ENCODE measurements at regions of chr16 and their contacts with region 1.

Region 1: GRCh38 chr16:30922960-30923535 is 324 bp upstream of the FBXL19 start:
- DNase-seq: peak; percentile 98
- H3K4me3 Mint-ChIP-seq: peak overlapping the region; percentile 99
- H3K27ac Mint-ChIP-seq: peak overlapping the region; percentile 100
- H3K4me1 Mint-ChIP-seq: peaks cover 10% of the 10 kb centered on the region
- H3K27me3 Mint-ChIP-seq: no peaks in the 10 kb centered on the region

Region 2: DNA sequence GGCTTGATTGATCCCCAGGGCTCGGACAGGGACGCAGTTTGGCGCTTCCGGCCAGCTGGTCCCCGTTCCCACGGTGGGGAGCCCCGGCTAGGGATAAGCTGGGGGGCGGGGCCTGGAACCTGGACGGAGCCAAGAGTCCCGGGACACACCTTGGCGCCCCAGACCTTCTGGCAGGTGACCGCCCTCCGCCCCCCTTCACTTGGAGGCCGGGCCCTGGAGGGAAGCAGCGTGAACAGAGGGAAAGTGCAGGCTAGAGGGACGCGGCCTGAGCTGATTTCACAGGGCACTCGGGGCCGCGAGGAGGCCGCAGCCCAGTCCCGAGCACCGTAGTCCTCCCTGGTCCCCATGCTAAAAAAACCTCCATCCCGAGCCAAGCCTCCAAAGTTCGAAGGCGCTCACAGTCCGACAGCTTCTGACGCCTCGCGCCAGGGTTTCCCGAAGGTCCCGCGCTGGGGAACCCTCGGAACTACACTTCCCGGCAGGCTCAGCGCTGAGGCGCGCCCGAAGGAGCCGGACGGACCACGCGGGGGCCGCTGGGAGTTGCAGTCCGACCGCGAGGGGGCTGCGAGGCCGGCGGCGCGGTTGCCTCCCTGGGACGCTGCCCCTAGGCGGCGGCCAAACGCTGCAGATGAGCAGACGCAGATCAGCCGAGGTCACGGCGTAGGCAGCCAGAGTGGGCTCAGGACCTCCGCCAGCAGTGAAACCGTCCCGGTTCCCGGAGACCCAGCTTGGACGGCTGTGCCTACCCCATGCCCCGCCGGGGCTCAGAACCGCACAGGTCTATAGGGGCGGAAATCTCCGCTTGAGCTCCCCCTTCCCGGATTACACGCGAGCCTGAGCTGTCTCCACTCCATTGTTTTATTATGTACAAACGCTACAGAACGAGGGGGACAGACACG is 831.3 kb before region 1 on chr16 and contains the start of gene TBX6:
- CTCF ChIA-PET with region 1: no interaction called
- POLR2A ChIA-PET with region 1: no interaction called
- intact Hi-C with region 1: no loop called
- DNase-seq: peak; percentile 96
- H3K4me3 Mint-ChIP-seq: peak within 1 kb of the TSS; percentile 83
- H3K27ac Mint-ChIP-seq: peak within 1 kb of the TSS; percentile 94
- H3K4me1 Mint-ChIP-seq: peaks cover 44% of the 10 kb centered on the region
- H3K27me3 Mint-ChIP-seq: no peaks in the 10 kb centered on the region
- total RNA-seq, gene TBX6: 2.3 to 2.9 TPM

Region 3: GRCh38 chr16:30370444-30371247 is 552.4 kb before region 1 on chr16 and contains the start of gene TBC1D10B:
- CTCF ChIA-PET with region 1: no interaction called
- POLR2A ChIA-PET with region 1: no interaction called
- intact Hi-C with region 1: loop called (anchors 10 kb)
- DNase-seq: peak; percentile 100
- H3K4me3 Mint-ChIP-seq: peak within 1 kb of the TSS; percentile 91
- H3K27ac Mint-ChIP-seq: peak within 1 kb of the TSS; percentile 95
- H3K4me1 Mint-ChIP-seq: peaks cover 34% of the 10 kb centered on the region
- H3K27me3 Mint-ChIP-seq: peaks cover 3% of the 10 kb centered on the region
- total RNA-seq, gene TBC1D10B: 54.7 to 54.8 TPM

Region 4: DNA sequence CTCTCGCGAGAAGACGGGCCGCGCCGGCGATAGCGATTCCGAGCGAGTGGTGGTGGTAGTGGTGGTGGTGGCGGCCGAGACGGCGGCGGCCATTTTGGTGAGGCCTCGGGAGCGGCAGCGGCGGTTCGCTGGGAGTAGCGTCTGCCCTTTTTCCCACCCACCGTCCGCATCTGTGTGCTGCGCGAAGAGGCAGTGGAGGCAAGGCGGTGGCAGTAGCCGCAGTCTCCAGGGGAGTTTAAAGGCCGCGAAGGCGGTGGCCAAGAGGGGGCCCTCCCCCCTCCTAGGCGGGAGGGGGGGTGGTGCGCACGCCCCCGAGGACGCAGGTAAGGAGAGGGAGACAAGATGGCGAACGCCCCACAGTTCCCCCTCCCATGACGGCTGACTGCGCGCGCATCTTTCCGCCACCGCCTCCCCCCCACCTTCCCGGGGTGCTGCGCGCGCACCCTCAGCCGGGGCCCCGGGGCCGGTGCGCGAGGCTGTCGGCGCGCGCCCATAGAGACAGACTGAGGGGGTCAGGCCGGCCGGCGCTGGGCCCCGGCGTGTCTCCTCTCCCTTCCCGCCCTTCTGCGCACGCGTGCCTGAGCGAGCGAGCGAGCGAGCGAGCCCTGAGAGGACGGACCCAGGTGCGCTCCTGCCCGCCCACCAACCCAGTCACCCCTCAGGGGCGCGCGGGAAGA is 224.8 kb before region 1 on chr16:
- CTCF ChIA-PET with region 1: no interaction called
- POLR2A ChIA-PET with region 1: no interaction called
- intact Hi-C with region 1: loop called (anchors 1 kb)
- DNase-seq: peak; percentile 99
- H3K4me3 Mint-ChIP-seq: peak overlapping the region; percentile 96
- H3K27ac Mint-ChIP-seq: peak overlapping the region; percentile 99
- H3K4me1 Mint-ChIP-seq: peaks cover 29% of the 10 kb centered on the region
- H3K27me3 Mint-ChIP-seq: no peaks in the 10 kb centered on the region

Region 5: DNA sequence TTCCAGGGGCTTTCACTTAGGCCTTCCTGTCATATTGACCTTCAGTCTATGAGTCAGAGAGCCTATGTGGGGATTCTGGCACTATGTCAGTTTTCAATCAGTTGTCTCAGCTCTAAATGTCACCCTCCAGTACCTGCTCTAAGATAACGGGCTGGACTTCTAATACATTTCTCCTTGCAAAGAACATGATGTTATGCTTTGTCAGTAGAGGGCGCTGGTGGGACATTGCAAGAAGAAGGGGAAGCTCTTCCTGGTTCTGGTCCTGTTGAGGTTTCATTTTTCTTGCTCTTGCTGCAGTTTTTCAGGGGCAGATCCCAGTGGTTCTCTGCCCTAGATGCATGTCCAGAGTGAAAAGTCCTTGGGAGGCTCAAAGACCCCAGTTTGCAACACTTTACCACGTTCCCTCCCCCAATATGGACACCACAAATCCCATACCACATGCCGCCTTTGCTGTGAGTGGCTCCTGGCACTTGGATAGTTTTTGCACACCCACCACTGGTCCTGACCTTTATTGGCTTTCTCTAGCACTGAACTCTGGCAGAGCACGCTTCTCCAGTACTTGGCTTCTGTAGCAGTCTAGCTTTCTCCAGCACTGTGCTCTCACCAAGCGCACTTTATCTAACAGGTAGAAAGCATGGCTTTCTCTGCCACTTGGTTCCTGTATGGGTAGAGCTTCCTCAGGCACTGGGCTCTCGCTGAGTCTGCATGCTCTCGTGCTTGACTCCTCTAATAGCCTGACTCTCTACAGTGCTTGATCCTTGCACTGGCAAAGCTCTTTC is 78.2 kb before region 1 on chr16:
- CTCF ChIA-PET with region 1: interaction called, 26 read pairs
- POLR2A ChIA-PET with region 1: no interaction called
- intact Hi-C with region 1: loop called (anchors 1 kb)
- DNase-seq: peak; percentile 80
- H3K4me3 Mint-ChIP-seq: no peak overlapping the region
- H3K27ac Mint-ChIP-seq: no peak overlapping the region
- H3K4me1 Mint-ChIP-seq: peaks cover 9% of the 10 kb centered on the region
- H3K27me3 Mint-ChIP-seq: no peaks in the 10 kb centered on the region

Region 6: GRCh38 chr16:30902029-30902972 is 20.7 kb before region 1 on chr16:
- CTCF ChIA-PET with region 1: interaction called, 3 read pairs
- POLR2A ChIA-PET with region 1: interaction called, 3 read pairs
- intact Hi-C with region 1: loop called (anchors 1 kb)
- DNase-seq: peak; percentile 69
- H3K4me3 Mint-ChIP-seq: peak overlapping the region; percentile 93
- H3K27ac Mint-ChIP-seq: peak overlapping the region; percentile 95
- H3K4me1 Mint-ChIP-seq: peaks cover 27% of the 10 kb centered on the region
- H3K27me3 Mint-ChIP-seq: no peaks in the 10 kb centered on the region

Region 7: GRCh38 chr16:31073968-31074813 is 151.1 kb after region 1 on chr16 and contains the starts of genes ZNF646 and ZNF668:
- CTCF ChIA-PET with region 1: no interaction called
- POLR2A ChIA-PET with region 1: no interaction called
- intact Hi-C with region 1: loop called (anchors 1 kb)
- DNase-seq: peak; percentile 99
- H3K4me3 Mint-ChIP-seq: peak within 1 kb of the TSS; percentile 98
- H3K27ac Mint-ChIP-seq: peak within 1 kb of the TSS; percentile 97
- H3K4me1 Mint-ChIP-seq: peaks cover 30% of the 10 kb centered on the region
- H3K27me3 Mint-ChIP-seq: no peaks in the 10 kb centered on the region
- total RNA-seq, gene ZNF646: 18.6 to 19.9 TPM
- total RNA-seq, gene ZNF668: 11.4 to 13.3 TPM

Measured in activated CD4-positive, alpha-beta memory T cell treated with anti-CD3 and anti-CD28 coated beads for 36 hours (primary cell).